Activated CD4-positive, alpha-beta memory T cell treated with anti-CD3 and anti-CD28 coated beads for 36 hours (primary cell): ENCODE measurements at regions of chr17 and their contacts with region 1.

Region 1: GRCh38 chr17:8248751-8249607 is at the start of gene PFAS:
- DNase-seq: peak; percentile 98
- H3K4me3 Mint-ChIP-seq: peak within 1 kb of the TSS; percentile 99
- H3K27ac Mint-ChIP-seq: peak within 1 kb of the TSS; percentile 97
- H3K4me1 Mint-ChIP-seq: peaks cover 38% of the 10 kb centered on the region
- H3K27me3 Mint-ChIP-seq: no peaks in the 10 kb centered on the region
- total RNA-seq, gene PFAS: 102 to 105 TPM

Region 2: GRCh38 chr17:7844292-7845154 is 404.5 kb before region 1 on chr17:
- CTCF ChIA-PET with region 1: no interaction called
- POLR2A ChIA-PET with region 1: no interaction called
- intact Hi-C with region 1: loop called (anchors 5 kb)
- DNase-seq: peak; percentile 92
- H3K4me3 Mint-ChIP-seq: peak overlapping the region; percentile 85
- H3K27ac Mint-ChIP-seq: peak overlapping the region; percentile 95
- H3K4me1 Mint-ChIP-seq: peaks cover 45% of the 10 kb centered on the region
- H3K27me3 Mint-ChIP-seq: no peaks in the 10 kb centered on the region

Region 3: DNA sequence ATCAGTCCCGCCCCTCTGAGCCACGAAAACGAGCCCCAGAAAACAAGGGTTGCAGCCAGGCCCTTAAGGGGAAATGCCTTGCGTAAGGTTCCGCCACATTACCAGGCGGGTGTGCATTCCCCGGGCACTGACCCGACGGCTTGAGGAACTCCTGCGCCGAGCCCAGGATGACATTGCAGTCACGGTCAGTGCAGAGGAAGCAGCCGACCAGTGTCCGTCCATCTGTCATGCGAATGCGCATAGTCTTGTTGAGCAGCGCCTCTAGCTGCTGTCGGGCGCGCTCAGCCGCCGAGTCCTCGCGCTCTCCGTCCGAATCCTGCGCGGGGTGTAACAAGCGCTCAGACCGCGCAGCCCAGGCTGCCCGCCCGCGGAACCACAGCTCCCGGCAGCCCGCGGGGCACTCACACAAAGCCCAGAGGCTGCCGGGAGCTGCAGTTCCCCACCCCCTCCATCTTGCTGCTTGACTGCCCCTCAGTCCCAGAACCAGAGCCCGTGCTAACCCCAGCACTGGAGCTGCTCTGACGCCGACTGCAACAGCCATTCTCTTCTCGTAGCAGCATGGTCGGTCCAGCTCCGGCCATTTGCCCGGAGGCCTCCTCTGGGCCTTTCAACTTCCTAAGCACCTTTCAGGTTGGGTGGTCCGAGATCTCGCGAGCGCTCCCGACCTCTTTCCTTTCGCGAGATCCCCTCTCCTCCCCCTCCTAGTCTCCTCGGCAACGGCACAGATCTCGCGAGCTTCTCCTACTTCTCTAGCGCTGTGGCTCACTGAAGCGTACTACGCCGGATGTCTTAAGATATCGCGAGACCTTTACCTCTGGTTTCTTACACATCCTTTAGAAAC is 391.9 kb before region 1 on chr17 and contains the start of gene NAA38:
- CTCF ChIA-PET with region 1: no interaction called
- POLR2A ChIA-PET with region 1: no interaction called
- intact Hi-C with region 1: no loop called
- DNase-seq: peak; percentile 97
- H3K4me3 Mint-ChIP-seq: no peak within 1 kb of the TSS
- H3K27ac Mint-ChIP-seq: no peak within 1 kb of the TSS
- H3K4me1 Mint-ChIP-seq: peaks cover 24% of the 10 kb centered on the region
- H3K27me3 Mint-ChIP-seq: no peaks in the 10 kb centered on the region
- total RNA-seq, gene NAA38: 68.2 to 74.7 TPM

Region 4: GRCh38 chr17:8156246-8156992 is 92.6 kb before region 1 on chr17:
- CTCF ChIA-PET with region 1: no interaction called
- POLR2A ChIA-PET with region 1: interaction called, 5 read pairs
- intact Hi-C with region 1: loop called (anchors 1 kb)
- DNase-seq: peak; percentile 100
- H3K4me3 Mint-ChIP-seq: no peak overlapping the region
- H3K27ac Mint-ChIP-seq: no peak overlapping the region
- H3K4me1 Mint-ChIP-seq: peaks cover 56% of the 10 kb centered on the region
- H3K27me3 Mint-ChIP-seq: no peaks in the 10 kb centered on the region

Region 5: GRCh38 chr17:8275421-8276290 is 26.7 kb after region 1 on chr17:
- CTCF ChIA-PET with region 1: no interaction called
- POLR2A ChIA-PET with region 1: no interaction called
- intact Hi-C with region 1: no loop called
- DNase-seq: no peak
- H3K4me3 Mint-ChIP-seq: no peak overlapping the region
- H3K27ac Mint-ChIP-seq: no peak overlapping the region
- H3K4me1 Mint-ChIP-seq: no peaks in the 10 kb centered on the region
- H3K27me3 Mint-ChIP-seq: no peaks in the 10 kb centered on the region

Region 6: GRCh38 chr17:8288336-8289102 is 39.5 kb after region 1 on chr17 and contains the start of gene RANGRF:
- CTCF ChIA-PET with region 1: no interaction called
- POLR2A ChIA-PET with region 1: interaction called, 26 read pairs
- intact Hi-C with region 1: loop called (anchors 1 kb)
- DNase-seq: peak; percentile 91
- H3K4me3 Mint-ChIP-seq: peak within 1 kb of the TSS; percentile 93
- H3K27ac Mint-ChIP-seq: peak within 1 kb of the TSS; percentile 95
- H3K4me1 Mint-ChIP-seq: peaks cover 31% of the 10 kb centered on the region
- H3K27me3 Mint-ChIP-seq: no peaks in the 10 kb centered on the region
- total RNA-seq, gene RANGRF: 41.7 to 45.5 TPM

Region 7: GRCh38 chr17:8300627-8301242 is 51.8 kb after region 1 on chr17:
- CTCF ChIA-PET with region 1: interaction called, 14 read pairs
- POLR2A ChIA-PET with region 1: interaction called, 17 read pairs
- intact Hi-C with region 1: loop called (anchors 1 kb)
- DNase-seq: peak; percentile 68
- H3K4me3 Mint-ChIP-seq: no peak overlapping the region
- H3K27ac Mint-ChIP-seq: no peak overlapping the region
- H3K4me1 Mint-ChIP-seq: peaks cover 9% of the 10 kb centered on the region
- H3K27me3 Mint-ChIP-seq: no peaks in the 10 kb centered on the region

Region 8: DNA sequence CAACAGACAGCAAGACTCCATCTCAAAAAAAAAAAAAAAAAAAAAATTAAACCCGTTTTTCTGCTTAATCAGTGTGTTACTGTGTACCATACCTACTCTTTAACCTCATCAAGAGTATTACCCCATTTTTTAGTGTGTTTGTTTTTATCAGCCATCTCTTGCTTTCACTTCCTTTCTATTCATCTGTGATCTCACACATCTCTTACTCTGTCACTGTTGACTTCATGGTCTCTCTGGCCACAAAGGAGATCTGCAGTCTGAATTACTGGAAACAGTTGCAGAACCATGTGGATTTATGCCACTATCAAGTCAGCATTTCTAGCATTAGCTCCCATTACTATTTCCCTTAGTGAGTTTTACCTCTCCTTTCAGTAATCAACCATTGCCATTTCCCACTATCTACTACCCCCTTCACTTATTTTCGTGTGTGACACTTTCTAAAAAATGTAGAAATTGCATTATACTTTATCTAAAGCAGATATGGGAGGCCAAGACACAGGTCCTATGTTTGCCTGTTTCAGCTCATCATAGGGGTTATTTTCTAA is 206.8 kb after region 1 on chr17:
- CTCF ChIA-PET with region 1: no interaction called
- POLR2A ChIA-PET with region 1: no interaction called
- intact Hi-C with region 1: no loop called
- DNase-seq: no peak
- H3K4me3 Mint-ChIP-seq: no peak overlapping the region
- H3K27ac Mint-ChIP-seq: peak overlapping the region; percentile 6
- H3K4me1 Mint-ChIP-seq: peaks cover 15% of the 10 kb centered on the region
- H3K27me3 Mint-ChIP-seq: no peaks in the 10 kb centered on the region